ENCODE measurements at regions of chr10 and their contacts with region 1.

Region 1: DNA sequence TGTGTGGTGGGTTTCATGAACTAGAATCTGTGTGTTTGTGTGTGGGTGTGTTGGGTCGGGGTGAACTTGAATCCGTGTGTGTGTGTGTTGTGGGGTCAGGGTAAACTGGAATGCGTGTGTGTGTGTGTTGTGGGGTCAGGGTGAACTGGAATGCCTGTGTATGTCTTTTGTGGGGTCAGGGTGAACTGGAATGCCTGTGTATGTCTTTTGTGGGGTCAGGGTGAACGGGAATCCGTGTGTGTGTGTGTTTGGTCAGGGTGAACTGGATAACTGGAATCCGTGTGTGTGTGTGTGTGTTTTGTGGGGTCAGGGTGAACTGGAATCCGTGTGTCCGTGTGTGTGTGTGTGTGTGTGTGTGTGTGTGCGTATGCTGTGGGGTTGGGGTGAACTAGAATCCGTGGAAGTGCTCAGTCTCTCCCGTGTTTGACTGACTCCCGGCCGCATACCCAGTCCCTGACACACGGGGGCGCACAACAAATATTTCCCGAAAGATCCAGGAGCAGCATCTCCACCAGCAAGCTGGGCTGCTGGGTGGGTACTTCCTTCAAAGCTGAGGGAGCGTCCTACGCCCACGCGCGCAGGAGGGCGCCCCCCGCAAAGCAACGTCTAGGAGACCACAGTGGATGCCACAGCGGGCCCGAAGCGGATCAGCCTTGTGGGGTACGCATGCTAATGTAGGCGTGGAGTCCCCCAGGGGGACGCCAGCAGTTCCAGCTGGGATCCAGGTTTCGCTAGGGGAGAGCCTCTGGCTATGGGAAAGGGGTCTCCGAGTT is 836 bp upstream of the CASP7 start:
- DNase-seq: peak; percentile 66
- H3K4me3 Mint-ChIP-seq: peak overlapping the region; percentile 99
- H3K27ac Mint-ChIP-seq: peak overlapping the region; percentile 98
- H3K4me1 Mint-ChIP-seq: peaks cover 44% of the 10 kb centered on the region
- H3K27me3 Mint-ChIP-seq: peaks cover 9% of the 10 kb centered on the region

Region 2: DNA sequence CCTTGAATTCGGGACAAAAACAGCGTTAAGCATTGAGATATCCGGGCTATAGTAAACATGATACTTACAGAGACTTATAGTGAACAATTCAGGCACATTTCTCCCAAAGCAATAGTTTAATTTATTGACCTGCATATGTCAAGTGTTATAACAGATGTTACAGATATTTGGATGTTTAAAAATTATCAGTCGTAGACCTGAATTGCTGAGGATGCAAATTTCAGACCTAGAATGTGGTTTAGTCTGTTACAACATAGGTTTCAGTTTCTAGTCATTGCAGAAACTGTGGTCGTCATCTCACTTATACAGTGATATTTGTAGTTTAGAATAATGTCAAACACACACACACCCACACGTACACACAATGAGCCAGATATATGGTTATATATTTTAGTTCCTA is 1146.7 kb before region 1 on chr10:
- intact Hi-C with region 1: loop called (anchors 5 kb)
- DNase-seq: no peak
- H3K4me3 Mint-ChIP-seq: peak overlapping the region; percentile 53
- H3K27ac Mint-ChIP-seq: peak overlapping the region; percentile 11
- H3K4me1 Mint-ChIP-seq: peaks cover 26% of the 10 kb centered on the region
- H3K27me3 Mint-ChIP-seq: peaks cover 8% of the 10 kb centered on the region

Region 3: DNA sequence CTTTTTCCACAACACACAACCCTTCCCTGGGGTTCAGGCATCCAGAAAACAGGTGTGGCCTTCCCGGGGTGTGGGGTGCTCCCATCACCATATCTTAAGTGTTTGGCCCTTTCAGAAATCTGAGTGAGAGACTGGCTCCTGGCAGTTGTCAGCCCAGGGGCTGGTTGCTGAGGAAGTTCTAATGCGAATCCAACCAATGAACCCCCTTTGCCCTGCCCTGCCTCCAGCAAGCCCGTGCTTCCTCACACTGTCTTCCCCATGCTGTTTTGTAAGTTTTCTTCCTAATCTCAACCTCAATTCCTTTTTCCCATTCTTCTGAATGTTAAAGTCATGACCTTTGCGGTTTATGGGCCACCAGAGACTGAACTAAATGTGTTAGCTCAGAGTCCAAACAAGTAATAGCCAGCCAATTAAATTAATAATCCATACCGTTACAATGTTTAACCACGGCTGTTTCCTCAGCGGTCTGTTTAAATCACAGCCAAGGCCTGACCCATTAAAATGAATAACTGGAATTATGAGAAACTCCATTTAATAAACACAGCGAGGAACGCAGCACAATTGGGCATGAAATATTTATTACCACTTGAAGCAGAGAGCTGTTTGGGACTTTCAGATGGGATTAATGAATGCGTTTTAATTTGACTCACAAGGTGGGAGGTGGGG is 819.8 kb before region 1 on chr10:
- intact Hi-C with region 1: no loop called
- DNase-seq: no peak
- H3K4me3 Mint-ChIP-seq: no peak overlapping the region
- H3K27ac Mint-ChIP-seq: no peak overlapping the region
- H3K4me1 Mint-ChIP-seq: no peaks in the 10 kb centered on the region
- H3K27me3 Mint-ChIP-seq: no peaks in the 10 kb centered on the region

Region 4: DNA sequence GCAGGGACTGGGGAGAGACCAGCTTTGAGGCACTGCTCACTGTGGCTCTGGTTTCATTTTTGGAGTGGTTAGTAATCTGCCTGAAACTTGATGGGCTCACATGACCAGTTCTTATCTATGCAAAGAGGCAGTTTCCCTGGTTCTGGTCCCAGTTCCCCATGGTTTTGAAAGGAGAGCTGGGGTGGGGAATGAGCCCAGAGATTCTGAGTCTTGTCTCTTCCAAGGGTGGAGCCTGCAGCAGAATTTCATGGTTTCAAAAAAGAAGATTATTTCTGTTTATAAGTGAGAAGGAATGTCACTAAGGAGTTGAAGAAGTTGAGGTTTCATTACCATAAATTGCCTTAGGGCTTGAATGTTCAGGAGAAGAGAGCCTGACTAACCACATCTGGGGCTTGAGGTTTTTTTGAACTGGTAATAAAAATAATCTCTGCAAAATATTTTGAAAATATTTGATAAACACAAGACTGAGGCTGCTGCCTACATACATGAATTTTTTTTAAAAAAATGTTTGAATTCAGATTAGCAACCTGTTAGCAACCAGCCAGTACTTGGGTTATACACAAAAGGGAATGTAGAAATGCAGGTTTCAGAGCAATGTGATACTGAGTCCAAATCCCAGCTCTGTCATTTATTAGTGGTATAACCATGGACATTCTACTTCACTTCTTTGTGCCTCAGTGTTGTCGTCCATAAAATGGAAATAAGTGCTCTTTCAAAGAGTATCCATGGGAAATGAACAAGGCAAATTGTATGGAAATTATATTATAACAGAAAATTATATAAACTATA is 316.0 kb before region 1 on chr10:
- intact Hi-C with region 1: no loop called
- DNase-seq: no peak
- H3K4me3 Mint-ChIP-seq: no peak overlapping the region
- H3K27ac Mint-ChIP-seq: no peak overlapping the region
- H3K4me1 Mint-ChIP-seq: no peaks in the 10 kb centered on the region
- H3K27me3 Mint-ChIP-seq: peaks cover 5% of the 10 kb centered on the region

Region 5: DNA sequence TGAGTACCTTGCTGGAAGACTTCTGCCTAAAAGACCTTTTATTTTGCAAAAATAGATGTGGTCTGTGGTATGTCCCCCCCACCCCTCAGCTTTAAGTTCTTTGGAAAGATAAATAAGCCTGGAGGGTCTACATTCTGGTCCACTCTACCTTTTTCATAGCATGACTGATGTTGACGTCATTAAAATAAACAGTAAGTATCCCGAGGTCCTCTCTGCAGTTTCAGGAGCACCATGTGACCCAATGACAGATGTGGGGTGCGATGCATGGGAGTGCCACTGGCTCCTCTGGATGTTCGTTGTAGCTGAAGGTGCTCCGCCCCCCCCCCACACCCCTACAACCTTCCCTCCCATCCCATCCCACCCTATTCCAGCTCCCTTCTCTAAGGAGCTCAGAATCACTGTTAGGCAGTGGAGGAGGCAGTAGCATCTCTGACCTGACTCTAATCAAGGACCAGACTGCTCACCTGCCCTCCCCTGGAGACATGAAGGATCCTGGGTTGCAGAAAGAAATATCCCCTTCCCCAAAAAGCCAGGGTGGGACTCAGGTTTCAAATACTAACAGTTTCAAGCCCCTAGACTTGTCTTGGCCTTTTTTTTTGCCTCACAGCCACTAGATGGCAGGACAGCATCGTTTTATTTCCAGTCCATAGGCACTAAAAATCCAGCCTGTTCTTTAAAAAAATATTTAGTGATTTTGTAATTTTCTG is 25.9 kb after region 1 on chr10:
- intact Hi-C with region 1: loop called (anchors 2 kb)
- DNase-seq: no peak
- H3K4me3 Mint-ChIP-seq: no peak overlapping the region
- H3K27ac Mint-ChIP-seq: no peak overlapping the region
- H3K4me1 Mint-ChIP-seq: peaks cover 28% of the 10 kb centered on the region
- H3K27me3 Mint-ChIP-seq: no peaks in the 10 kb centered on the region

Region 6: DNA sequence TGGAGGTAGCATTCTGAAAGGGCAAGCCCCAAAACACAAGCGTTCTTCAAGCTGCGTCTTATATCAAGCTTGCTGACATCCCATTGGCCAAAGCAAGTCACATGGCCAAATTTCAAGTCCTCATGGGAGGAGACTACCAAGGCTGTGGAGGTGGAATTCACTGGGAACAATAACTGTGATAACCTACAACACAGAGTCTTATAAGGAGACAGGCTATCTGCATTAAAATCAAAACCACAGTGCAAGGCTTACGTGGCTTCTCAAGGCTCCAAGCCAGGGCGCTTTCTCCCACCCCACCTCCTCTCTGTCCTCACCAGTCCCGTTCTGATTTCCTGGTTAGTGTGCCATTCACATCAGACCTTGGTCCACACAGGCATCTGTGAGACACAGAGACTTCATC is 404.2 kb after region 1 on chr10:
- intact Hi-C with region 1: loop called (anchors 2 kb)
- DNase-seq: no peak
- H3K4me3 Mint-ChIP-seq: no peak overlapping the region
- H3K27ac Mint-ChIP-seq: no peak overlapping the region
- H3K4me1 Mint-ChIP-seq: no peaks in the 10 kb centered on the region
- H3K27me3 Mint-ChIP-seq: peaks cover 12% of the 10 kb centered on the region

Region 7: GRCh38 chr10:114526504-114527238 is 847.8 kb after region 1 on chr10:
- intact Hi-C with region 1: loop called (anchors 2 kb)
- DNase-seq: peak; percentile 82
- H3K4me3 Mint-ChIP-seq: peak overlapping the region; percentile 87
- H3K27ac Mint-ChIP-seq: peak overlapping the region; percentile 92
- H3K4me1 Mint-ChIP-seq: peaks cover 58% of the 10 kb centered on the region
- H3K27me3 Mint-ChIP-seq: peaks cover 2% of the 10 kb centered on the region